PC-9 (cell line): ENCODE measurements at regions of chr6 and their contacts with region 1.

Region 1: GRCh38 chr6:117840541-117840983 is 66.5 kb upstream of the SLC35F1 start:
- DNase-seq: peak; percentile 1 to 41
- H3K4me3 ChIP-seq: no peak overlapping the region
- H3K27ac ChIP-seq: no peak overlapping the region
- H3K4me1 ChIP-seq: no peaks in the 10 kb centered on the region
- H3K27me3 ChIP-seq: no peaks in the 10 kb centered on the region
- CTCF ChIP-seq: peak; percentile 86

Region 2: GRCh38 chr6:118551063-118552053 is 710.8 kb after region 1 on chr6:
- CTCF ChIA-PET with region 1: no interaction called
- POLR2A ChIA-PET with region 1: no interaction called
- intact Hi-C with region 1: loop called (anchors 10 kb)
- DNase-seq: peak; percentile 10 to 51
- H3K4me3 ChIP-seq: no peak overlapping the region
- H3K27ac ChIP-seq: no peak overlapping the region
- H3K4me1 ChIP-seq: no peaks in the 10 kb centered on the region
- H3K27me3 ChIP-seq: no peaks in the 10 kb centered on the region
- CTCF ChIP-seq: peak; percentile 88